Dendritic cell treated with granulocyte-macrophage colony-stimulating factor and Interleukin-4, amounts not matched to agents 40 ng/mL and 50 ng/mL, for 4 days (primary cell): ENCODE measurements at regions of chr6 and their contacts with region 1.

Region 1: GRCh38 chr6:137094411-137095008 is 49.7 kb upstream of the IL20RA start:
- H3K4me3 Mint-ChIP-seq: no peak overlapping the region
- H3K27ac Mint-ChIP-seq: no peak overlapping the region
- H3K4me1 Mint-ChIP-seq: peaks cover 14% of the 10 kb centered on the region
- H3K27me3 Mint-ChIP-seq: no peaks in the 10 kb centered on the region

Region 2: GRCh38 chr6:137202078-137202477 is 107.6 kb after region 1 on chr6:
- intact Hi-C with region 1: loop called (anchors 10 kb)
- H3K4me3 Mint-ChIP-seq: no peak overlapping the region
- H3K27ac Mint-ChIP-seq: no peak overlapping the region
- H3K4me1 Mint-ChIP-seq: peaks cover 16% of the 10 kb centered on the region
- H3K27me3 Mint-ChIP-seq: no peaks in the 10 kb centered on the region

Region 3: GRCh38 chr6:137271245-137272183 is 177.0 kb after region 1 on chr6:
- intact Hi-C with region 1: loop called (anchors 2 kb)
- H3K4me3 Mint-ChIP-seq: no peak overlapping the region
- H3K27ac Mint-ChIP-seq: no peak overlapping the region
- H3K4me1 Mint-ChIP-seq: peaks cover 11% of the 10 kb centered on the region
- H3K27me3 Mint-ChIP-seq: no peaks in the 10 kb centered on the region